Activated B cell treated with CpG ODN at 0.5 μM for 24 hours (primary cell): ENCODE measurements at regions of chr2 and their contacts with region 1.

Region 1: DNA sequence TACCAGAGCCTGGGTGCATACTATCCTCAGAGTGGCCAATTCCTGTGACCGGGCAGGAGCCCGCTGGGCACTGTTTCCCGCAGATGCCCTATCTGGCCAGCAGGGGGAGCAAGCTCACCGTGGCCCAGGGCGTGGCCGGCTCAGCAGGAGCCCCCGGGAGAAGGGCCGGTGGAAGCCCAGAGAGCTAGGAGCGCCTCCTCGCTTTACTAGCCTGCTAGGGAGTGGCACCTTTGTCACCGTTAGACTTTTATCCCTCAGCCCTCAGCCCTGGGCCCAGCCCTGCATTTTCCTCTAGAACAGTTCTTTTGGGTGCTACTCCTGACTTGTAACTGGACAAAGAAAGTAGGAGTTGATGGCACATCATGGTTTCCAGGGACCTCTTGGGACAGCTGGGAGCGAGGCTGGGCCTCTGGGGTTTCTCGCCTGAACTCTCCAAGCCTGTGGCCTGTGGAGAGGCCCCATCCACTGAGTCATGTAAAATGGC is 24.0 kb downstream of the TMEM177 start:
- DNase-seq: peak; percentile 52
- ATAC-seq: peak; percentile 97
- H3K4me3 Mint-ChIP-seq: no peak overlapping the region
- H3K27ac Mint-ChIP-seq: no peak overlapping the region
- H3K4me1 Mint-ChIP-seq: peaks cover 2% of the 10 kb centered on the region
- H3K27me3 Mint-ChIP-seq: peaks cover 6% of the 10 kb centered on the region
- CTCF ChIP-seq: peak; percentile 69

Region 2: GRCh38 chr2:118477111-118477862 is 1225.7 kb before region 1 on chr2:
- CTCF ChIA-PET with region 1: no interaction called
- POLR2A ChIA-PET with region 1: no interaction called
- intact Hi-C with region 1: no loop called
- DNase-seq: no peak
- ATAC-seq: no peak
- H3K4me3 Mint-ChIP-seq: no peak overlapping the region
- H3K27ac Mint-ChIP-seq: no peak overlapping the region
- H3K4me1 Mint-ChIP-seq: no peaks in the 10 kb centered on the region
- H3K27me3 Mint-ChIP-seq: no peaks in the 10 kb centered on the region
- CTCF ChIP-seq: no peak

Region 3: DNA sequence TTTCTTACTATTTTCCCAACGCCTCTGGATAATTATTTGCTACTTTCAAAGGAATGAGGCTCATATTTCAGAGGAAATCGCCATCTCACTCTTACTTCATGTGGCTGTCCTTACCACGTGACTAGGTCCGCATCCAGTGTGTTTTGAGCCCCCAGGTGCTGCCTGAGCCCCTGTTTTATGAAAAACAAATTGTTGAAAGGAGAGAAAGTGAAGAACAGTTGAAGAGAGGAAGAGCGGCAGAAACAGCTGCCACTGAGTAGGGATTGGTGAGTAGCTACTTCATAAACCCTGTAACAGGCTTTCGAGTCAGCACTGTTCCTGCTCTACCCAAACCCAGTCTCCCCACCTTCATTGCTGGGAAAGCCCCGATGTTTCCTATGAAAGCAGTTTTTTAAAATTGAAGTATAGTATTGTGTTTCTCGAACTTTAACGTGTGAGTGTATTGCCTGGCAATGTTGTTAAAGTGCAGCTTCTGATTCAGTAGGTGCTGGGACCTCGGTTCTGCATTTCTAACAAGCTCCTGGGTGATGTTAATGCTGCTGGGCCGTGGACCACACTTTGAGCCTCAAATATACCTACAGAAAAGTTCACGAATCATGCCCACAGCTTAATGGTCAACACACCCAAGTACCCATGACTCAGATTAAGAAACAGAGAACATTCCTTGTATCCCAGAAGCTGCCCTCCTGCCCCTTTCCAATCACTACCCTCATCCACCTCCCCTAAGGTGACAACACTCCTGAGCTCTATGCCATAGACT is 15.7 kb after region 1 on chr2:
- CTCF ChIA-PET with region 1: interaction called, 11 read pairs
- POLR2A ChIA-PET with region 1: no interaction called
- intact Hi-C with region 1: no loop called
- DNase-seq: no peak
- ATAC-seq: no peak
- H3K4me3 Mint-ChIP-seq: no peak overlapping the region
- H3K27ac Mint-ChIP-seq: no peak overlapping the region
- H3K4me1 Mint-ChIP-seq: no peaks in the 10 kb centered on the region
- H3K27me3 Mint-ChIP-seq: no peaks in the 10 kb centered on the region
- CTCF ChIP-seq: no peak

Region 4: DNA sequence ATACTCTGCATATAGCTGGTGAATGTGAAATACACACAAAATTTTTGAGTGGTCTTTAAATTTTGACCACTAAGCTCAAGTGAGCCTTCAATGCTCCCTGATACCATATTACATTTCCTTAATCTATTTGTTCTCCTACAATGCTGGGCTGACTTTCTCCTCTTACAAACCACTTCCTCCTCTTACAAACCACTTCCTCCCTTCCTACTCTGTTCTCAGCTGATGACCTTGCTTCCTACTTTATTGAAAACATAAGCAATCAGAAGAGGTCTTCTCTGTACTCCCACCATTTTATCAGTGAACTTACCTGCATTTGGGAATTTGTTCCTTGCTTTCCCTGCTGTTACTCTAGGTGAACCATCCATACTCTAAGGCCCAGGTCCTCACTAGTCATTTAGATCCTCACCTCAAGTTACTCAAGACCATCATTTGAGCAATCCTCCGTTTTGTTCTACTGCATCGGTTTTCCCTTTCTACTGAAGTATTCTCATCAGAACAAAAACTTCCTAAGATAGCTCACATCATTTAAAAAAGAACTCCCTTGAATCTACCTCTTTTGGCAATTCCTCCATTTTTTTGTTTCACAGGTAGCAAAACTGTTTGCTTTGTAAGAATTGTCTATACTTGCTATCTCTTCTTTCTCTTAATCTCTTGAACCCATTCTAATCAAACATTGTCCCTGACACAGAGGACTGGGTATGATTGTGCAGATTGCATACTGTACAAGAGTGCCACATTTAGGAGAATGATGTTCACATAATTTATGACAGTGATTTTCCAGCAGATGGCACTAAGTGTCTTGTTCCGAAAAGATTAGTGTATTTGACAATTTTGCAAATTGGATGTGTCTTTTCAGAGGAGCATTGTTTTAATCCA is 406.5 kb after region 1 on chr2:
- CTCF ChIA-PET with region 1: no interaction called
- POLR2A ChIA-PET with region 1: no interaction called
- intact Hi-C with region 1: loop called (anchors 10 kb)
- DNase-seq: no peak
- ATAC-seq: peak; percentile 57
- H3K4me3 Mint-ChIP-seq: peak overlapping the region; percentile 42
- H3K27ac Mint-ChIP-seq: peak overlapping the region; percentile 62
- H3K4me1 Mint-ChIP-seq: peaks cover 17% of the 10 kb centered on the region
- H3K27me3 Mint-ChIP-seq: no peaks in the 10 kb centered on the region
- CTCF ChIP-seq: no peak